Psoas muscle (tissue), 8 donors: ENCODE measurements at regions of chr5 and their contacts with region 1.

Region 1: GRCh38 chr5:172939071-172939470 is 20.2 kb upstream of the RPL26L1 start:
- DNase-seq: no peak
- ATAC-seq: peak; percentile 53 to 75 (median 71)
- H3K4me3 ChIP-seq: no peak overlapping the region
- H3K27ac ChIP-seq: no peak overlapping the region
- H3K4me1 ChIP-seq: no peaks in the 10 kb centered on the region
- H3K27me3 ChIP-seq: no peaks in the 10 kb centered on the region
- CTCF ChIP-seq: peak; percentile 22

Region 2: DNA sequence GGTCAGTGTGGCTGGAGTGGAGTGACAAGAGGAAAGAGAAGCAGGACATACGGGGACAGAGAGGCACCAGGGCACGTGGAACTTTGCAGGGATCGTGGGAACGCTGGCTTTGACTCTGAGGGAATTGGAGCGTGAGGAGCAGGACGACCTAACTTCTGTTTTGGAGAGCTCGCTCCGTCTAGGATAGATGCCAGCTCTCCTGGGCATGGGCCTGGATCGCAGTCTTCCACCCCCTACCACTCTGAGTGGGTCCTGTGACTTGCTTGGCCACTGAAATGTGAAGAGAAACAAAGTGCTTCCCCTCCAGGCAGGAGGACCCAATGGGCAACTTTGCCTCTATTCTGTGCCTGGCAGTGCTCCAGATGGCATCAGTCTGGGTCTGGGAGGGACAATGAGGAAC is 476.0 kb before region 1 on chr5:
- intact Hi-C with region 1: loop called in 1 of 2 experiments (anchors 10 kb)
- DNase-seq: no peak
- ATAC-seq: no peak
- H3K4me3 ChIP-seq: no peak overlapping the region
- H3K27ac ChIP-seq: no peak overlapping the region
- H3K4me1 ChIP-seq: no peaks in the 10 kb centered on the region
- H3K27me3 ChIP-seq: peaks cover 0 to 7% (median 2%) of the 10 kb centered on the region in 3 donors
- CTCF ChIP-seq: no peak

Region 3: GRCh38 chr5:172469697-172470096 is 469.4 kb before region 1 on chr5:
- intact Hi-C with region 1: loop called (anchors 5 to 10 kb)
- DNase-seq: no peak
- ATAC-seq: no peak
- H3K4me3 ChIP-seq: no peak overlapping the region
- H3K27ac ChIP-seq: no peak overlapping the region
- H3K4me1 ChIP-seq: no peaks in the 10 kb centered on the region
- H3K27me3 ChIP-seq: no peaks in the 10 kb centered on the region
- CTCF ChIP-seq: no peak